Heart right ventricle (tissue), 16 donors: ENCODE measurements at regions of chr6 and their contacts with region 1.

Region 1: DNA sequence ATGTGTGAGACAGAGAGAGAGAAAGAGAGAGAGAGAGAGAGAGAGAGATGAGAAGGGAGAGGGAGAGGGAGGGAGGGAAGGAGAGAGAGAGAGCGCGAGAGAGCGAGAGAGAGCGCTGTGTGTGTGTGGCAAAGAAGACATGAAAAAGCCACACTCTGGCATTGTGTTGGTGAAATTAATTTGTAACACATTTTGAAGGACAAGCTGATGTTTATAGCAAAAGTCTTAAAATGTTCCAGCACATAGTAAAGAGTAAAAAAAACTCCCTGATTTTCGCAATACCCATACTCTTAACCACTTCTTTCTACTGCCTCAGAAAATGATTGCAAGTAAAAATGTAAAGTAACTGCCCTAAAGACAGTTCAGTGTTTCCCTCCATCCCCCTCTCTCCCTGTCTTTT is 56.7 kb downstream of the SLC22A1 start:
- DNase-seq: no peak
- ATAC-seq: no peak
- H3K4me3 ChIP-seq: no peak overlapping the region
- H3K27ac ChIP-seq: no peak overlapping the region
- H3K4me1 ChIP-seq: no peaks in the 10 kb centered on the region
- H3K27me3 ChIP-seq: peaks cover 0 to 7% (median 0%) of the 10 kb centered on the region in 7 donors
- CTCF ChIP-seq: no peak

Region 2: DNA sequence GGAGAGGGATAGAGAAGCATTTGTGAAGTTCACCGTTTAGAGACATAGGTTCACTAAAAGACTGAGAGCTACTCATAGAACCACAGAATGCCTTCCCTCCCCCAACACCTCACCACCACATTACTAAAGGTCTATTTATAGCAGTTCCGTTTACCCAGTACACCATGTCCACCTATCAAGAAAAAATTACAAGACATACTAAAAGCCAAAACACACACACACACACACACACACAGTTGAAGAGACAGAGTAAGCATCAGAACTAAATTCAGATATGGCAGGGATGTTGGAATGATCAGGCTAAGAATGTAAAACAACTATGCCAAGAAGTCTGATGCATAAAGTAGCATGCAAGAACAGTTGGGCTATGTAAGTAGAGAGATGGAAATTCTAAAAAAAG is 222.2 kb after region 1 on chr6:
- intact Hi-C with region 1: loop called in 1 of 10 experiments (anchors 5 kb)
- DNase-seq: no peak
- ATAC-seq: peak in 2 of 8 donors; percentile 33 to 61
- H3K4me3 ChIP-seq: no peak overlapping the region
- H3K27ac ChIP-seq: no peak overlapping the region
- H3K4me1 ChIP-seq: peaks cover 0 to 11% (median 0%) of the 10 kb centered on the region in 9 donors
- H3K27me3 ChIP-seq: no peaks in the 10 kb centered on the region
- CTCF ChIP-seq: no peak

Region 3: GRCh38 chr6:160455541-160456213 is 277.4 kb after region 1 on chr6:
- intact Hi-C with region 1: no loop called
- DNase-seq: peak; percentile 51 to 58
- ATAC-seq: peak; percentile 72 to 89 (median 85)
- H3K4me3 ChIP-seq: peak overlapping the region in 6 of 10 donors; percentile 6 to 43 (median 25)
- H3K27ac ChIP-seq: peak overlapping the region in 5 of 10 donors; percentile 23 to 63 (median 39)
- H3K4me1 ChIP-seq: peaks cover 0 to 14% (median 5%) of the 10 kb centered on the region in 9 donors
- H3K27me3 ChIP-seq: no peaks in the 10 kb centered on the region
- CTCF ChIP-seq: peak; percentile 76 to 98 (median 95)